ENCODE measurements at regions of chr10 and their contacts with region 1.

Region 1: DNA sequence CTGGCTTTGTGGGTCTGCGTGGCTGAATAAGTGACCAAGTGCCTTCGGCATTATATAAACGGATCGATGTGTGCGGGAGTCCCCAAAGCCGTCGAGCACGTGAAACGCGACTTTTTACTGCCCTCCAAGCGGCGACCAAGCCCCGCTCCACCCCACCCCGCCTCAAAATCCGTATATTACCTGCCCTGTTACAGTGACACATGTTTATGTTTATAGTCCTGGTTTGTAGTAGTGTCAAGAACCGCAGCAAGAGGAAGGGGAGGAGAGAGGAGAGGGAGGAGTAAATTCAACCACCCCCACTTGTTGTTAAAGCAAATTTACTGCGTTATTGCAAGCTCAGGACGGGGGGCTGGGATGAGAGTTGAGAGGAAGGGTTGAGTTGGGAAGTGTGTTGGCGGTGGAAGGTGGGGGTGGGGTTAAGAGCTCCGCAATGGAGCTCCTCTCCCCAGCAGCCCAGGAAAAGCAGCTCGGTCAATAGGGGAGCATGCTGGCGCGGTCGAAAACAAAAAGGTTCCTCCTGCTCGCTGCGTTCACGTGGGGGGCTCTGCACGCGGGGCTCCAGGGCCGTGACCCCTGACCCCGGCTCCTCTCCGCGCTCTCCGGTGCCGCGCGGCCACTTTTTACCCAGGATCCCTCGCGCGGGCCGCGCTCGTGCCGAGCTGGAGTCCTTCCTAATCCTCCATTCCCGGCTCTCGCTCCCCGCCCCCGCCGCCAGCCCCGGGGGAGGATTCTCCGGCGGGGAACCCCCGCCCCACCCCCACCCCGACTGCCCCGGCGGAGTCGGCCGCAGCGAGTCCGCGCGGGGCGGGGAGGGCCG is at the start of gene SKIDA1:
- DNase-seq: peak; percentile 90
- H3K4me3 ChIP-seq: peak within 1 kb of the TSS; percentile 48 to 81 (median 53)
- H3K27ac ChIP-seq: peak within 1 kb of the TSS; percentile 97
- H3K4me1 ChIP-seq: peaks cover 29% of the 10 kb centered on the region
- H3K27me3 ChIP-seq: no peaks in the 10 kb centered on the region
- CTCF ChIP-seq: no peak
- POLR2A ChIP-seq: peak; percentile 71
- total RNA-seq, gene SKIDA1: 0.71 and 0.83 TPM in 2 replicates

Region 2: DNA sequence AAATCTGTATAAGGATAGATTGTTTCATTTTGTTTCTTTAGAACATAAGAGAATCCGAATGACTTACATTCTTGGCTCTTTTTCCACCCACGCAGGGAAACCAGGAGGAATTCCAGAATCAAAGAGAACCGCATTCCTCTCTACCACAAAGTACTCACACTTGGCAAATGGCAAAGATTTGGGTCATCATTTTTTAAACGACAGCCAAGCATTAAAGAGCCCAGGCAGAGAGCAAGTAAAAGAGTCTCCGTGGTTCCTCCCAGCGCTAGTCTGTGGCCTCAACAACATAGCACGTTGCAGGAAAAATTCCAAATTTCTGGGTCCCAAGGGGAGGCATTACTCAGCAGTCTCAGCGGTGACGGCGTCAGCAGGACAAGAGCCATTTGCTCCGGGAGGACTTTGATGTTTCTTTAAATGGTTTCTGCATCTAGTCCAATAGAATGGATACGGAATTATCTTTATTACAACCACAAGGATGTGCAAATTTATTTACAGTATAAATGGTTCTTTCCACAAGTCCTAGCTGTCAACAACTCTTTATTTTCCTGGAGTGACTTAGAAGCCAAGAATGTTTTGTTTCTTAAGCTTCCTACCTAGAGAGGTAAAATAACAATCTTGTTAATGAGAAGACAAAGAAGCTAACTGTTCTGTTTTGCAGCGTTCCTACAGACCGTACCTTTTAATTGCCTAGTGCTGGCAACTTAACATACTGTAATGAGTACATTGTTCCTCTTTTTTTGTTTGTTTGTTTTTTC is 232.6 kb before region 1 on chr10:
- CTCF ChIA-PET with region 1: no interaction called
- POLR2A ChIA-PET with region 1: no interaction called
- dilution Hi-C with region 1: no loop called
- intact Hi-C with region 1: loop called (anchors 5 kb)
- DNase-seq: peak; percentile 82
- H3K4me3 ChIP-seq: peak overlapping the region; percentile 2 to 57 (median 32)
- H3K27ac ChIP-seq: peak overlapping the region; percentile 83
- H3K4me1 ChIP-seq: peaks cover 19% of the 10 kb centered on the region
- H3K27me3 ChIP-seq: no peaks in the 10 kb centered on the region
- CTCF ChIP-seq: no peak
- POLR2A ChIP-seq: no peak

Region 3: DNA sequence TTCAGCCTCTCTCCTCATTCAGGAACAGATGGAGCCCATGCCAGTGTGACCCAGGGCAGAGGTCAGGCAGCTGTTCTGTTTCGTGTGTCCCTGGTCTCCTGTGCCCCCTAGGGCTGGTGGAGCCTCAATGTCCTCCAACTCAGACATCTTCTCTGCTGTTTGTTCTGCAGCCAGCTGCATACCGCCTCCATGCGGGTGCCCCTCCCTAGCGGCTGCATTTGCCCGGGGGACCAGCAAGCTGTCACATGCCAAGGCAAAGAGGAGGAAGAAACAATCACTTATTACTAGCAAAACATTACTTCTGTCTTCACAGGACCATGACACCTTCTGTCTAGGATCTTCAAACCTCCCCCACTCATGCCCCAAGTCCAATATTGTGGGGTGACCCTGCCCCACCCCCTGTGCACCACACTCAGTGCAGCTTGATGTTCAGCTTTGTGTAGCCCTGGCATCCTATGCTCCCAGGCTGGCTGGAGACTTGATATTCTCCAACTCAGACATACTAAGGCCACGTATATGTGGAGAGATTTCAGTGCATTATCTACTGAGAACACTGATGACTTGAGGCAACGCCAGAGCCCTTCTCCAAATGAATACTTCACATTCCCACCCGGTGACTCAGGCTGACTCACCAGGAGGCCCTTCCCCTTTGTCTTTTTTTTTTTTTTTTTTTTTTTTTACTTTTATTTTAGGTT is 189.0 kb before region 1 on chr10:
- CTCF ChIA-PET with region 1: no interaction called
- POLR2A ChIA-PET with region 1: no interaction called
- dilution Hi-C with region 1: no loop called
- intact Hi-C with region 1: loop called (anchors 2 kb)
- DNase-seq: peak; percentile 93
- H3K4me3 ChIP-seq: no peak overlapping the region
- H3K27ac ChIP-seq: peak overlapping the region; percentile 97
- H3K4me1 ChIP-seq: peaks cover 22% of the 10 kb centered on the region
- H3K27me3 ChIP-seq: no peaks in the 10 kb centered on the region
- CTCF ChIP-seq: peak; percentile 20 to 28
- POLR2A ChIP-seq: peak; percentile 20

Region 4: DNA sequence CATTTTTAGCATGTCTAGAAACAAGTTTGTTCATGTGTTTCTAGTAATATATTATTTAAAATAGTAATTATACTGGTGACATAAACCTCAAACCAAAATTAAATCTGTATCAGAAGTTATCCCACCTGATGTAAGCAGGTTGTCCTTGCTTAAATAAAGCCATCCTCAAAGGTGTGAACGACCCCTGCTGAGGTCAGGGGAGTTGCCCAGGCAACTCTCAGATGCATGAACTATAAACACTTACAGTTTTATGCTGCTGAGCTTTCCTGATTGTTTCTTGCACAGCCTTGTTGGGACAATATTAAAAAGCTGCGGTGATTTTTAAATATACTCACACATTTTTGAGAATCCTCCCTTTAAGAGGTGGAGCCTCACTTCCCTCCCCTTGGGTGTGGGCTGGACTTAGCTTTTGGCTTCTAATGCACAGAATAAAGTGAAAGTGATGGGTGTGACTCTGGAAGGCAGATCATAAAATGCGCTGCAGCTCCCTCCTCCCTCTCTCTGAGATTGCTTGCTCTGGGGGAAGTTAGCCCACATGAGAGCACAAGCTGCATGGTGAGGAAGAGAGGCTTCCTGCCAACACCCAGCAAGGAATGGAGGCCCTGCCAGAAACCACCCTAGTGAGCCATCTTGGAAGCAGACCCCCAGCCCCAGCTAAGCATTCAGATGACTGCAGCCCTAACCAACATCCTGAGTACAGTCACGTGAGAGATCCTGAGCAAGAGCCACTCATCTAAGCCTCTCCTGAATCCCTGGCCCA is 152.7 kb before region 1 on chr10:
- CTCF ChIA-PET with region 1: no interaction called
- POLR2A ChIA-PET with region 1: no interaction called
- dilution Hi-C with region 1: no loop called
- intact Hi-C with region 1: loop called (anchors 2 kb)
- DNase-seq: peak; percentile 88
- H3K4me3 ChIP-seq: peak overlapping the region in 1 of 3 experiments; percentile 15
- H3K27ac ChIP-seq: peak overlapping the region; percentile 14
- H3K4me1 ChIP-seq: peaks cover 26% of the 10 kb centered on the region
- H3K27me3 ChIP-seq: no peaks in the 10 kb centered on the region
- CTCF ChIP-seq: no peak
- POLR2A ChIP-seq: no peak

Region 5: DNA sequence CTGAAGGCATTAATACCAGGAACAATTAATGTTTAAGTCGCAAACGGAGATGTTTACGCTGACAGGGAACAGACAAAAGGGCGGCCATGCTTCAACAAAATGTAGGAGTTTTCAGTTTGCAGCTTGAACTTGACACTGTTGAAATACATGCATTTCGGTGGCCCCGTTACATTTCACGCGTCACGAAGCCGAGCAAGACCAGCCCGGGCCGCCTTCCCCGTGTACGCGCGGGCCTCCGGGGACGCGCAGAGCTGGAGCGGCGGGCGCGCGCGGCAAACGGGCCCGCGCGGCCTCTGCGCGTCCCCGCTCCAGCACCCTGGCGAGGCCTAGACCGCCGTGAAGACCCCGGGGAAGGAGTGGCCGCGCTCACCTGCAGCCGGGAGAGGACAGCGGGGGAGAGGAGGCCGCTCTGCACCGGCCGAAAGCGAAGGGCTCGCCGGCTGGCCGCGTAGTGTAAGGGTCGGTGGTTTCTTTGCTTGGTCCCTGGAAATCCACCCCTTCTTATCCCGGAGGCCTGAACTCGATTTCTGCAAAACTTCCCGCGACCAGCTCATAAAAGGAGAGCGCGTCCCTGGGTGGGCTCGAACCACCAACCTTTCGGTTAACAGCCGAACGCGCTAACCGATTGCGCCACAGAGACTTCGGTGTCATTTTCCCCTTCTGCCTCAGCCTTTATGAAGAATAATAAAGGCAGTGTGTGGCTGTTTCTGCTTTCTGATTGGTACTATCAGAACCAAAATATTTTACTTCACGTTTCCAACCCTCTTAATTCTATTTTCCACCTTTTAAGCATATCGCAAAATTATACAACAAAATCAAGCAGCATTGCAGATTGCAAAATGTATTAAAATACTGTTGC is 703.6 kb after region 1 on chr10:
- CTCF ChIA-PET with region 1: no interaction called
- POLR2A ChIA-PET with region 1: no interaction called
- dilution Hi-C with region 1: no loop called
- intact Hi-C with region 1: loop called (anchors 5 kb)
- DNase-seq: peak; percentile 94
- H3K4me3 ChIP-seq: peak overlapping the region; percentile 69 to 97 (median 96)
- H3K27ac ChIP-seq: peak overlapping the region; percentile 49
- H3K4me1 ChIP-seq: peaks cover 9% of the 10 kb centered on the region
- H3K27me3 ChIP-seq: no peaks in the 10 kb centered on the region
- CTCF ChIP-seq: no peak
- POLR2A ChIP-seq: peak; percentile 30